CD8-positive, alpha-beta memory T cell (primary cell): ENCODE measurements at regions of chr1 and their contacts with region 1.

Region 1: GRCh38 chr1:205523891-205524793 is 19.7 kb downstream of the CDK18 start:
- DNase-seq: peak; percentile 58 to 80 (median 62)
- H3K4me3 ChIP-seq: no peak overlapping the region
- H3K4me3 Mint-ChIP-seq: no peak overlapping the region
- H3K27ac ChIP-seq: no peak overlapping the region
- H3K27ac Mint-ChIP-seq: no peak overlapping the region
- H3K4me1 ChIP-seq: no peaks in the 10 kb centered on the region
- H3K4me1 Mint-ChIP-seq: peaks cover 0 to 2% (median 0%) of the 10 kb centered on the region in 3 donors
- H3K27me3 ChIP-seq: no peaks in the 10 kb centered on the region
- H3K27me3 Mint-ChIP-seq: peaks cover 3 to 5% of the 10 kb centered on the region in 2 donors

Region 2: DNA sequence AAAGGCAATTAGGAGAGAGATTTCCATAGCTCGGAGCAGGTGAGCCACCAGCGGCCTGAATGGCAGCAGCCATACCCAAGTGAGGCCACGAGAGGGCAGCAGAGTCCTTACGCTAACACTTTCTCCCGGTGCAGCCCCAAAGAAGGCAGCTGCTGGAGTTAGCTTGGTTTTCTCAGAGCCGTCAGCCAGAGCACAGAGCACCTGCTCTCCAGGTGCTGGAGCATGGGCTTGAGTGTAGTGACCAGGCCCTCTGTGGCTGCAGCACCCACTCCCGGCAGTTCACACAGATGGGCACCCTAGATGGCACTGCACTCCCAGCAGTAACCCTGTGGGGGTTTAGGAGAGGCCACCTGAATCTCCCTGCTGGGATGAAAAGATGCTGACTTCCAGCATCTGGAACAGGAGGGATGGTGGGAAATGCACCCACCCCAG is 250.6 kb before region 1 on chr1:
- CTCF ChIA-PET with region 1: interaction called, 22 read pairs
- POLR2A ChIA-PET with region 1: no interaction called
- DNase-seq: peak; percentile 74 to 87 (median 76)
- H3K4me3 ChIP-seq: peak overlapping the region; percentile 33
- H3K4me3 Mint-ChIP-seq: peak overlapping the region; percentile 33 to 79 (median 56)
- H3K27ac ChIP-seq: no peak overlapping the region
- H3K27ac Mint-ChIP-seq: peak overlapping the region in 5 of 8 donors; percentile 14 to 75 (median 71)
- H3K4me1 ChIP-seq: peaks cover 40% of the 10 kb centered on the region
- H3K4me1 Mint-ChIP-seq: peaks cover 23 to 45% (median 31%) of the 10 kb centered on the region in 3 donors
- H3K27me3 ChIP-seq: no peaks in the 10 kb centered on the region
- H3K27me3 Mint-ChIP-seq: peaks cover 0 to 2% of the 10 kb centered on the region in 2 donors

Region 3: GRCh38 chr1:205335643-205336091 is 188.5 kb before region 1 on chr1:
- CTCF ChIA-PET with region 1: interaction called, 41 read pairs
- POLR2A ChIA-PET with region 1: no interaction called
- DNase-seq: peak; percentile 63 to 83 (median 64)
- H3K4me3 ChIP-seq: no peak overlapping the region
- H3K4me3 Mint-ChIP-seq: no peak overlapping the region
- H3K27ac ChIP-seq: no peak overlapping the region
- H3K27ac Mint-ChIP-seq: no peak overlapping the region
- H3K4me1 ChIP-seq: no peaks in the 10 kb centered on the region
- H3K4me1 Mint-ChIP-seq: peaks cover 0 to 2% (median 0%) of the 10 kb centered on the region in 3 donors
- H3K27me3 ChIP-seq: no peaks in the 10 kb centered on the region
- H3K27me3 Mint-ChIP-seq: peaks cover 0 to 10% of the 10 kb centered on the region in 2 donors

Region 4: GRCh38 chr1:205354259-205354904 is 169.8 kb before region 1 on chr1:
- CTCF ChIA-PET with region 1: interaction called, 61 read pairs
- POLR2A ChIA-PET with region 1: no interaction called
- DNase-seq: peak; percentile 32 to 74 (median 46)
- H3K4me3 ChIP-seq: no peak overlapping the region
- H3K4me3 Mint-ChIP-seq: no peak overlapping the region
- H3K27ac ChIP-seq: no peak overlapping the region
- H3K27ac Mint-ChIP-seq: no peak overlapping the region
- H3K4me1 ChIP-seq: no peaks in the 10 kb centered on the region
- H3K4me1 Mint-ChIP-seq: no peaks in the 10 kb centered on the region
- H3K27me3 ChIP-seq: peaks cover 11% of the 10 kb centered on the region
- H3K27me3 Mint-ChIP-seq: peaks cover 9 to 33% of the 10 kb centered on the region in 2 donors

Region 5: GRCh38 chr1:205485338-205486228 is 38.6 kb before region 1 on chr1:
- CTCF ChIA-PET with region 1: interaction called, 104 read pairs
- POLR2A ChIA-PET with region 1: no interaction called
- DNase-seq: peak; percentile 52 to 85 (median 71)
- H3K4me3 ChIP-seq: no peak overlapping the region
- H3K4me3 Mint-ChIP-seq: peak overlapping the region in 1 of 7 donors; percentile 4
- H3K27ac ChIP-seq: no peak overlapping the region
- H3K27ac Mint-ChIP-seq: peak overlapping the region in 4 of 8 donors; percentile 44 to 80 (median 48)
- H3K4me1 ChIP-seq: peaks cover 22% of the 10 kb centered on the region
- H3K4me1 Mint-ChIP-seq: peaks cover 44 to 50% (median 49%) of the 10 kb centered on the region in 3 donors
- H3K27me3 ChIP-seq: no peaks in the 10 kb centered on the region
- H3K27me3 Mint-ChIP-seq: peaks cover 2 to 17% of the 10 kb centered on the region in 2 donors

Region 6: GRCh38 chr1:205512059-205513045 is 11.8 kb before region 1 on chr1:
- CTCF ChIA-PET with region 1: interaction called, 17 read pairs
- POLR2A ChIA-PET with region 1: no interaction called
- DNase-seq: no peak
- H3K4me3 ChIP-seq: no peak overlapping the region
- H3K4me3 Mint-ChIP-seq: peak overlapping the region in 1 of 7 donors; percentile 12
- H3K27ac ChIP-seq: no peak overlapping the region
- H3K27ac Mint-ChIP-seq: peak overlapping the region in 3 of 8 donors; percentile 14 to 81 (median 28)
- H3K4me1 ChIP-seq: no peaks in the 10 kb centered on the region
- H3K4me1 Mint-ChIP-seq: no peaks in the 10 kb centered on the region
- H3K27me3 ChIP-seq: no peaks in the 10 kb centered on the region
- H3K27me3 Mint-ChIP-seq: peaks cover 0 to 4% of the 10 kb centered on the region in 2 donors

Region 7: DNA sequence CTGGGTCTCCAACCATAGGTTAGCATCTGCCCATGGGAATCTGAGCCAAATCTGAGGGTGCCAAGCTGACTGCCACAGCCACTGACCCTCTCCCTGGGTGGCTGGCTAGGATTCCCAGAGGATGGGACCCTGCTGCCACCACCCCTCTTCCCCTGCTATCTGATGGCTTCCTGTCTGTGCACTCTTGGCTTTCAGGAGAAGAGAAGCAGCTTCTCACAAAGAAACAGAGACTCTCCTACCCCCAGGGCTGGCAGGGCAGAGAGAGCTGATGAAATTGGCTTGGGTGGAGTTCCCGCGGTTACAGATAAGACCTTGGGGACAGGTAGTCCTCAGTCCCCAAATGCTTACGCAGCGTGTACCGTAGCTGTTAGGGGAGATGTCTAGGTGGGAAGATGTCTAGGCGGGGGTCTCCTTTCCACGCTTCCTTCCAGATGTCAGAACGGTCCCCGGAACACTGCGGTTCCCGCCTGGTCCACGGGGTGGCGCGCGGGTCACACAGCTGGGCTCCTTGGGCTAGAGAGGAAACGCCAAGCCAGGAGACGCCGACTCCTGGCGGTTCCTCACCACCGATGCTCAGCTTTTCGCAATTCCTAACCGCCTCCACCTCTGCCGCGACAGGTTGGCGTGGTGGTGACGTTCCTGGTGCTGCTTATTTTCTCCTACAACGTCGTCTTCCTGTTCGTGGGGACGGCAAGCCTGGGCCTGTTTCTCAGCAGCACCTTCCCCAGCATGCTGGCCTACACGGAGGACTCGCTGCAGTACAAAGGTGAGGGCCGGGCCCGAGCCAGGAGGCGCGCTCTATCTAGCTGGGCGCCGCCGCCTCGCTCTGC is 67.6 kb after region 1 on chr1:
- CTCF ChIA-PET with region 1: interaction called, 16 read pairs
- POLR2A ChIA-PET with region 1: no interaction called
- DNase-seq: peak; percentile 82 to 91 (median 85)
- H3K4me3 ChIP-seq: peak overlapping the region; percentile 68
- H3K4me3 Mint-ChIP-seq: peak overlapping the region; percentile 86 to 94 (median 89)
- H3K27ac ChIP-seq: peak overlapping the region; percentile 26
- H3K27ac Mint-ChIP-seq: peak overlapping the region; percentile 33 to 93 (median 90)
- H3K4me1 ChIP-seq: peaks cover 37% of the 10 kb centered on the region
- H3K4me1 Mint-ChIP-seq: peaks cover 17 to 30% (median 29%) of the 10 kb centered on the region in 3 donors
- H3K27me3 ChIP-seq: no peaks in the 10 kb centered on the region
- H3K27me3 Mint-ChIP-seq: no peaks in the 10 kb centered on the region

Region 8: GRCh38 chr1:205680073-205680851 is 156.1 kb after region 1 on chr1 and contains the start of gene SLC45A3:
- CTCF ChIA-PET with region 1: no interaction called
- POLR2A ChIA-PET with region 1: no interaction called
- DNase-seq: peak in 3 of 5 donors; percentile 9 to 32 (median 18)
- H3K4me3 ChIP-seq: peak within 1 kb of the TSS; percentile 53
- H3K4me3 Mint-ChIP-seq: peak within 1 kb of the TSS; percentile 75 to 91 (median 81)
- H3K27ac ChIP-seq: peak within 1 kb of the TSS; percentile 72
- H3K27ac Mint-ChIP-seq: peak within 1 kb of the TSS in 1 of 8 donors; percentile 30
- H3K4me1 ChIP-seq: peaks cover 9% of the 10 kb centered on the region
- H3K4me1 Mint-ChIP-seq: peaks cover 11 to 17% (median 15%) of the 10 kb centered on the region in 3 donors
- H3K27me3 ChIP-seq: no peaks in the 10 kb centered on the region
- H3K27me3 Mint-ChIP-seq: peaks cover 11 to 24% of the 10 kb centered on the region in 2 donors
- total RNA-seq, gene SLC45A3: 0.29 to 0.33 TPM

Region 9: DNA sequence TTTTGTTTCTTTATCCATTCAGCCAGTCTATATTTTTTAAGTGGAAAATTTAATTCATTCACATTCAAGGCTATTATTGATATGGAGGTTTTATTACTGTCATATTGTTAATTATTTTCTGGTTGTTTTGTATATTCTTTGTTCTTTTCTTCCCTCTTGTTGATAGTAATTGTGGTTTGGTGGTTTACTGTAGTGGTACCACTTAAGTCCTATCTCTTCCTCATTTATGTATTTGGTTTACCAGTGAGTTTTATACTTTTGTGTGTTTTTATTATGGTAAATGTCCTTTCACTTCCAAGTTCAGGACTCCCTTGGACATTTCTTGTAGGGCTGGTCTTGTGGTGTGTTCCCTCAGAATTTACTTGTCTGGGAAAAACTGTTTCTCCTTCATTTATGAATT is 353.9 kb after region 1 on chr1:
- CTCF ChIA-PET with region 1: no interaction called
- POLR2A ChIA-PET with region 1: no interaction called
- DNase-seq: no peak
- H3K4me3 ChIP-seq: no peak overlapping the region
- H3K4me3 Mint-ChIP-seq: no peak overlapping the region
- H3K27ac ChIP-seq: no peak overlapping the region
- H3K27ac Mint-ChIP-seq: no peak overlapping the region
- H3K4me1 ChIP-seq: no peaks in the 10 kb centered on the region
- H3K4me1 Mint-ChIP-seq: peaks cover 0 to 4% (median 0%) of the 10 kb centered on the region in 3 donors
- H3K27me3 ChIP-seq: no peaks in the 10 kb centered on the region
- H3K27me3 Mint-ChIP-seq: peaks cover 19 to 29% of the 10 kb centered on the region in 2 donors